Left colon (tissue), 2 donors: ENCODE measurements at regions of chr11 and their contacts with region 1.

Region 1: DNA sequence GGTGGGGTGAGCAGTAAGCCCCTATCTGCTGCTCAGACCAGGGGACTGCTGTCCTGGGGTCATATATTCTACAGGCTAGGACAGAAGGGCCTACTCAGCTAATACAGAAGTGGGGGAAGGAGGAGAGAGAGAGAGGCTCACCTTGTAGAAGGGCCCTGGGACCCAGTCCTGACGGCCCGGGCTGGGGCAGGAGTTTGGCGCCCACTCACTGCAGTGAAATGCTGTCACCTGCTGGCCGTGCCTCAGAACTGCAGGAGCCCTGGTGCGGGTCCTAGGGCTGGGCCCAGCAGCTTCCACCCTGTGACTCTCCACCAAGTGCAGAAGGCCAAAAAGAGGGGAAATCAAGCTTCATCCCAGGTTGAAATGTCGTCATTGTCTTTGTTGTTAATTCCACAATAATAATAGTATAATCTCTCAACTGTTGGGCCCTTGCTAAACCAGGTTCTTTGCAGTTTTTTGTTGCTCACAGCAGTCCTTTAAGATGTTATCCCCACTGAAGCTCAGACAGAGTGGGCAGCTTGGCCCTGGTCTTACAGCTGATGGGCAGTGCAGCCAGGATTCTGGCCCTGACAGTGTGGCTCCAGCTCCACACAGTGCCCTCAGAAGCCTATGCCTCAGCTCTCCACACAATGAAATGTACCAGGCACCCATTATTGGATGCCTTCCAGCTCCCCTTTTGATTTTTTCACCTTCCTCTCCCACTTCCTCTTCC is 29.6 kb downstream of the TRIM29 start:
- DNase-seq: peak in 1 of 2 donors; percentile 75
- ATAC-seq: peak; percentile 95

Region 2: GRCh38 chr11:119666463-119667131 is 441.7 kb before region 1 on chr11:
- intact Hi-C with region 1: loop called (anchors 5 to 10 kb)
- DNase-seq: peak; percentile 51 to 74
- ATAC-seq: peak; percentile 91

Region 3: DNA sequence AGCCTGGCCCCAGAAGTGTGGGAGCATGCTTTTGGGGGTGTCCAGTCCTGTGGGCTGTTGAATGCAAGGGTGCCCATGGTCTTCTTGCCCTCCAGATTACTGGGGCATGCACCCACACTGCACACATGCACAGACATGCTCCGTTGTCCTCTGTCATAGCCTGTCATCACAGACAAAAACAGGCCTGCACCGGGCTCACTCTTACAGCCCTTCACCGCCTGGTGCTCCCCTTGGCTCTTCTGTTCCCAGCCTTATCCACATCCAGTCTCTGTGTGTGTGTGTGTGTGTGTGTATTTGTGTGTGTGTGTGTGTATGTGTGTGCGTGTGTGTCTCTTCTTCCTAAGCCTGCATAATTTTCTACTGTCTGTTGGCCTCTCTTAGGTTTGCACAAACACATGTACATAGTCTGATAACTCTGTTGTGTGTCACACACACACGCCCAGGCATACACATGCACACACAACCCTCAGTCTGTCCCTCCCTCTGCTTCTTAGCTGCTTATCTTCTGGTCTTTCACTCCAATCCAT is 355.9 kb before region 1 on chr11:
- intact Hi-C with region 1: no loop called
- DNase-seq: no peak
- ATAC-seq: no peak